ENCODE measurements at regions of chr18 and their contacts with region 1.

Region 1: GRCh38 chr18:61893971-61894750 is 1.4 kb upstream of the RNF152 start:
- DNase-seq: no peak
- H3K4me3 ChIP-seq: peak overlapping the region; percentile 80
- CTCF ChIP-seq: peak; percentile 38

Region 2: DNA sequence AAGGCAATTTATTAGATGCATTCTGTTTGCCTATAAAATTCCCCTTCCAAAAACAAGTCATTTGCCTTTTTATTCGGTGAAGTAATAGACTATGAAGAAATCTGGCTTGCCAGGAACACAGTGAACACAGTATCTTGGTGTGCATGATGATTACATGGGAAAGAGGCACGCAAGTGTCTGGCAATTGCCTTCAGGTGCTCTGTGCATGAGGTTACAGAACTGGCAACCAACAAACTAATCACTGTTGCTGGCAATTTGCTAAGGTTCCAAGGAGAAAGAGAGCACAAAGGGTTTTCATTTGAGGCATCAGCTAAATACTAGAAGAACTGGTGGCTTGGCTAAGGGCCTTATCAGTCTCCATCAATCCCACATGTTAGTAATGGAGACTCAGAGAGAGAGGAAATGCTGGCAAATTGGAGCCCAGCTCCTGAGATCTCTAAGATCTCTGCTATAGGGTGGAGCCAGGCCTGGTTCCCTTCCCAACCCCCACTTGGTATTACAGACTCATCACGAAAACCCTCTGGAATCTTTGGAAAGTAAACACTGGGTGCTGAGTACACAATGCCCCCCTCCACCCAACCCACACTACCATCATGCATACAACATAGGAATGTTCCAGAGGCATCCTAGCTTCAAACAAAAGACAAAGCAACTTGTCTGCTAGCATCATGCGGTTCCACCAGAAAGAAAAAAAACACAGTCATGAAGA is 11.7 kb before region 1 on chr18:
- CTCF ChIA-PET with region 1: interaction called, 16 read pairs
- POLR2A ChIA-PET with region 1: no interaction called
- DNase-seq: no peak
- H3K4me3 ChIP-seq: no peak overlapping the region
- CTCF ChIP-seq: no peak

Measured in AG04449 (cell line).